ENCODE measurements at regions of chr13 and their contacts with region 1.

Region 1: DNA sequence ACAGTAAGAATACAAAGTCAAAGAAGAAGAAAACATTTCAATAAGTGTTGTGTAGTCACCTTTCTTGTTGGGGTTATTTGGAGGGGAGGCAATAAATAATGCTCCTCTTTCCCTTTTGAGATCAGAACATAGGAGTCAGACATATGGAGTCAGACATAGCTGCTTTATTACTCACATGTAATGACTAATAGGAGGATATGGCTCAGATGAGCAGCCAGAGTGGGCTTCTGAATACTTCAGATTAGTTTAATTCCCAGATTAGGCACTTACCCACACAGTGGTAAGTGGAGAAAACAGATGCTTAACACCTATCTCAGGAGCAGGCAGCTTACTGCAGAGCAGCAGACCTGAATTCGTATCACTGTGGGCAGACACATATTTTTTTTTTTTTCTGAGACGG is 31.7 kb upstream of the C1QTNF9B start:
- DNase-seq: peak; percentile 90
- ATAC-seq: peak; percentile 94
- H3K4me3 ChIP-seq: no peak overlapping the region
- H3K27ac ChIP-seq: no peak overlapping the region
- H3K4me1 ChIP-seq: peaks cover 2% of the 10 kb centered on the region; the same call in 1 of the 2 replicates
- H3K27me3 ChIP-seq: no peaks in the 10 kb centered on the region
- CTCF ChIP-seq: no peak
- POLR2A ChIP-seq: no peak
- RAD21 ChIP-seq: no peak

Region 2: DNA sequence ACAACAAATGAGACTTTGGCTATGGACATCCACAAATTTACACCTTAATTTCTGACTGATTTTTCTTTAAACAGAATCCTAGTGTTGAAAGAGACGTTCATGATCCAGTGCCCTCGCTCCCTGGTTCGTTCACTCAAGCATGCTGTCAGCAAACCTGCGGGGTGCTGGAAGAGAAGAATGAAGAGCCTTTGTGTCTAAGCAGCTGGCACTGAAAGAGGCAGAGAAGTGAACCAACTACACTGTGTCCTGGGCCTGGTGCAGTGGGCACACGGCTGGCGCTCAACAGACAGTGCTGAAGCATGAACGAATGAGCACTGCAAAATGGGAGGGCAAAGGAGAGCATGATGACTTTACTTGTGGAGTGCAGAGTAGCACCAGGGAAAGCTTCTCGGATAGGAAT is 86.6 kb before region 1 on chr13:
- CTCF ChIA-PET with region 1: no interaction called
- POLR2A ChIA-PET with region 1: no interaction called
- dilution Hi-C with region 1: no loop called
- in situ Hi-C with region 1: no loop called
- intact Hi-C with region 1: no loop called
- DNase-seq: no peak
- ATAC-seq: no peak
- H3K4me3 ChIP-seq: no peak overlapping the region
- H3K27ac ChIP-seq: no peak overlapping the region
- H3K4me1 ChIP-seq: no peaks in the 10 kb centered on the region
- H3K27me3 ChIP-seq: no peaks in the 10 kb centered on the region
- CTCF ChIP-seq: no peak
- POLR2A ChIP-seq: no peak
- RAD21 ChIP-seq: no peak

Region 3: DNA sequence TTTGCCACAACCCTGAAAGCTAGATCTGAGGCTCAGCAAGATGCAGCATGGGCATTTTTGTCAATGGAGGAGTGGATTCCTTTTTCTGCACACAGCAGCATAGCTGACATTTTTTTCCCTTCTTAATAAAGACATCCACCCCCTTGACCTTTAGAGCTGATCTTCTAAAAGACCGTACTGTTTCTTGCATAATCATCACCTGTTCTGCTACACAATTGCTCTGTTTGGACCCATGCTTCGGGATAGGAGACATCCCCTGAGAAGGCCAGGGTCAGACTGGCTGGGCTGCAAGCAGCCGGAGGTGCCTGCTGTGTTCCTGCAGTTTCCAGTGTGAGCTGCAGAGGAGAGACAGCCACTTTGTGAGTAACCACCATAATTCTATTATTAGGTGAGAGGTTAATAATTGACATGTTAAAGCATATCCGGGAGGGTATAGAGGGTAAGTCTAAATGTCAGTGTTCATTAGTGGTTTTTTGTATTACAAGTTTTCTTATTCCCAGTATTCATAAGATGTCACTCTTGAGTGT is 76.8 kb after region 1 on chr13:
- CTCF ChIA-PET with region 1: no interaction called
- POLR2A ChIA-PET with region 1: no interaction called
- dilution Hi-C with region 1: no loop called
- in situ Hi-C with region 1: no loop called
- intact Hi-C with region 1: loop called (anchors 5 kb)
- DNase-seq: no peak
- ATAC-seq: peak; percentile 69
- H3K4me3 ChIP-seq: no peak overlapping the region
- H3K27ac ChIP-seq: no peak overlapping the region
- H3K4me1 ChIP-seq: peaks cover 12% of the 10 kb centered on the region
- H3K27me3 ChIP-seq: no peaks in the 10 kb centered on the region
- CTCF ChIP-seq: no peak
- POLR2A ChIP-seq: no peak
- RAD21 ChIP-seq: no peak

Region 4: DNA sequence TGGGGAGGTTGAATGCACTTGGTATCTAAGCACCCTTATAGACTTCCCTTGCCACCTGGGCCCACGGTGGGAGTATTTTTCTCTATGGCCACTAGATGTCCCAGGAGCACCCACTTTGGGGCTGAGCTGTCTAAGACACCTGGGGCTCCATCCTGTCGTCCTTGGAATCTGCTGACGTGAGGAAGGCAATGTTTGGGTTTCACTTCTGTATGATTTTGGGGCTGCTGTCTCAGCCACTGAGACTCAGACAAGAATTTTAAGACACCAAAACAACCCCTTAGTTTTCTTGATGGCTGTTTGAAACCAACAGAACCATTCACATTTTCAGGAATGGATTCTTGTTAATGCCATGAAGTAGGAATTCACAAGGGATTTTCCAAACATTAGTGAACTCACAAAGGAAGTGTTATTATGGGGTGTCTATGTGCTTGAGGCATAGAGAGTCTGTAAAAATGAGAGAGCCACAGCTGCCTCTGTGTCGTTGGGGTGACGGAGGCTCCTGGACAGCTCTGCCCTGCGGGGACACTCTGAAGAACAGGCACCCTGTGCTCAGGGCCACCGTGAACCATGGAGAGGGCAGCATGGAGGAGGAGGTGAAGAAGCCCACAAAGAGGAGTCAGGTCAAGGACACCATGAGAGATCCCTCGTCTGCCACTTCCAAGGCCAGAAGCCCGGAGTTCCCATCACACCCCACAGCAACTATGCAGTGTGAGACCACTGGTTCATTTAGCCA is 124.7 kb after region 1 on chr13:
- CTCF ChIA-PET with region 1: no interaction called
- POLR2A ChIA-PET with region 1: no interaction called
- dilution Hi-C with region 1: no loop called
- in situ Hi-C with region 1: no loop called
- intact Hi-C with region 1: no loop called
- DNase-seq: peak; percentile 68
- ATAC-seq: peak; percentile 86
- H3K4me3 ChIP-seq: no peak overlapping the region
- H3K27ac ChIP-seq: no peak overlapping the region
- H3K4me1 ChIP-seq: peaks cover 14% of the 10 kb centered on the region
- H3K27me3 ChIP-seq: no peaks in the 10 kb centered on the region
- CTCF ChIP-seq: peak; percentile 70
- POLR2A ChIP-seq: no peak
- RAD21 ChIP-seq: peak; percentile 84

Measured in IMR-90 (cell line).